Activated T-helper 2 cell treated with anti-CD3 and anti-CD28 coated beads, Interferon-gamma antibody, Interleukin-2, Interleukin-4, amounts not matched to agents 10 μg/mL and 5 μg/mL and 100 μg/mL, durations not matched to agents 14 hours and 24 hours and 36 hours (primary cell): ENCODE measurements at regions of chr2 and their contacts with region 1.

Region 1: DNA sequence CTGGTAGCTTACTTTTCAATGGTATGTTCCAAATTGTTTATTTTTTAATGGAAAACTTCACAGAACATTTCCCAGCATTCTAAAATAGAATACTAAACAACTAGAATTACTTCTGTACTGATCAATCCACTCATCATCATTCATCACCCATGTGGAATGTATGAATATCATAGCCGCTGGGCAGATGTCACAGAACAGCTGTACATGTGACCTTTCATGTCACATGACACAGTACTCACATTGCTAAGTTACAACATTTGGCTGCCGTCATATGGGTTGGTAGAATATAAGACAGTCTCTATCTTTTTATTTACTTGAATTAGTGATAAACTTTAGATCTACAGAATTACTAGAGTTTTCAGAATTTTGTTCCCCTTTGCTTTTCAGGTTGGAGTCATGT is 387.6 kb downstream of the ZEB2 start:
- DNase-seq: no peak
- H3K4me3 Mint-ChIP-seq: no peak overlapping the region
- H3K27ac Mint-ChIP-seq: no peak overlapping the region
- H3K4me1 Mint-ChIP-seq: peaks cover 31% of the 10 kb centered on the region
- H3K27me3 Mint-ChIP-seq: no peaks in the 10 kb centered on the region

Region 2: DNA sequence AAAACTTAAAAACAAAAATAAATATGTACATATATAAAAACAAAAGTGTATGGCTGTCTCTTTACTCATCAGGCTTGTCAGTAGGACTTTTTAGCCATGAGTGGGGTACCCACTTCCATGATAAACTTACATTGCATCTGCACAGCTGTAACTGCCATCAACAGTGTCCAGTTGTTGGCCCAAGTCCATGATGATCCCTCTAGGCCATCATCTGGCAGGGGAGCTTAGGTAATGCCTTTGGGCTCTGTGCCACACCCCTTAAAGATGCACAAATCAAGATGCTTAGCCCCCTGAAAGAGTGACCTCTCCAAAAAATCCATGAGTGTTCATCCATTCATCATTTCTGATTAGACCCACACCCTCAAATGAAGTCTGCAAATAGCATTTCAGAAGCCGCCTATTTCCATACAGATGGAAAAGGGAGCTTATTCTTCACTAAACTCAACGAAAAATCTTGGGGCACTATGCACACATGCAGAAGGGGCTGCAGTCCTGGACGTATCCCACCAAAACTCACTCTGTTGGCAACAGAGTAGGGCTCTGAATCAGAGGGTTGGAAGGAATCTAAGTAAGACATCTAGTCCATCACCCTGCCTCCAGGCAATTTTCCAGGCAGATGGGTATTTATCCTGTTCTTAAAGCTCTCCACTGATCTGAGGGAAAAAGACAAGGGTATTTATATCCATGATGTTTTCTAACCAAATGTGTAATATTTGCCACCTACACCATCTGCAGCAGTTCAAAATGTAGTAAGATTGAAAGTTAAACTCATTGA is 303.4 kb before region 1 on chr2:
- intact Hi-C with region 1: no loop called
- DNase-seq: no peak
- H3K4me3 Mint-ChIP-seq: no peak overlapping the region
- H3K27ac Mint-ChIP-seq: no peak overlapping the region
- H3K4me1 Mint-ChIP-seq: no peaks in the 10 kb centered on the region
- H3K27me3 Mint-ChIP-seq: peaks cover 22% of the 10 kb centered on the region

Region 3: DNA sequence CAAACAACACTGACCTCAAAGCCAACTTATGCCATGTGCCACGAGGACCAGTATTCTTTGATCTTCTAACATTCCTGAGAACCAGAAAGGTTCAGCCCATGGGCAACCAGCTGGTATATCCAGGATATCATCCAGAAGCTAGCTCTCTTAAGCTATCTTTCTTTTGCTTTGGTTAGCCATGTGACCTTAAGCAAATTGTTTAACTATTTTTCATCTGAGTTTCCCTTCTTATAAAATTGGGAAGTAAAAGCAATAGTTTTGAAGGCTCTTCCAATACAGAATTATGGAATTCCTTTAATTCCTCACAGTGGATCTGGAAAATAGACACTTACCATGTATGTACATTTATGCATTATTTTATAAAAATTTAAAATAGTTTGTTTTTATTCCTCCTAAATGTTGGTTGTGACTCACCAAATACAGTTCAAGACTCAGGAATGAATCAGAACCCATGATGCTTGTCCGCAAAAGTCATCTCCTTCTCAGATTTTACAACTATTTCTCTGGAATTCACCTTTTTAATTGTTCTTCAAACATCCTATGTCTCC is 48.2 kb before region 1 on chr2:
- intact Hi-C with region 1: loop called (anchors 5 kb)
- DNase-seq: no peak
- H3K4me3 Mint-ChIP-seq: no peak overlapping the region
- H3K27ac Mint-ChIP-seq: peak overlapping the region; percentile 23
- H3K4me1 Mint-ChIP-seq: peaks cover 31% of the 10 kb centered on the region
- H3K27me3 Mint-ChIP-seq: no peaks in the 10 kb centered on the region

Region 4: GRCh38 chr2:144198117-144198516 is 65.8 kb after region 1 on chr2:
- intact Hi-C with region 1: loop called (anchors 5 kb)
- DNase-seq: no peak
- H3K4me3 Mint-ChIP-seq: no peak overlapping the region
- H3K27ac Mint-ChIP-seq: peak overlapping the region; percentile 82
- H3K4me1 Mint-ChIP-seq: peaks cover 58% of the 10 kb centered on the region
- H3K27me3 Mint-ChIP-seq: no peaks in the 10 kb centered on the region